GM12878 (cell line): ENCODE measurements at regions of chr12 and their contacts with region 1.

Region 1: DNA sequence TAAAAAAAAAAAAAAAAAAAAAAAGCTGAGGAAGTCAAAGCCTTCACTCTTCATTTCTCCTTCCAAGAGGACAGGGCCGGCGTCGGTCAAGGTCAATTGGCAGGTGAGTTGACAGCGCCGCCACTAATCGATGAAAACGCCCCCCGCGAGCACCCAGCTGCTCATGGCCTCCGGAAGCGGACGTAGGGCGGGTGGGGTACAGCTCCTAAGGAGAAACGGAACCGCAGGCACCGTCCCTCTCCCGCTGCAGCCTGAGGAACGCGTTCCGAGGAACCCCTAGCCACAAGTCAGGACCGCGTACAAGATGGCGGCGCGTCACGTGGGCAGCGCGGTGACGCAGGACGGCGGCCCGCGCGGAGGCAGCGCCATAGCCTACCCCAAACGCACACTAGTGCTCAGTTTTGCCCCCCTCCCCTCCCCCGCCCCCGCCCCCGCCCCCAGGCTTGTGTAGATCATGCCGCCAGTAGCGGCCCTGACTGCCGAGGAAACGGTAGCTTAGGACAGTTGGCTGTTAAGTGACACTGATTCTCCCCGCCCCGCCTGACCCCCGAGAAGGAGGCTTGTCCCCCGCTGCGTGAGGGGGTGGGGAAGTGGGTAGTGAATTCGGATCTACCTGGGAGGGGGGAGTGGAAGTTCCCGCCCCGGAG is at the start of gene ATF1:
- DNase-seq: peak; percentile 73
- ATAC-seq: peak; percentile 85
- H3K4me3 ChIP-seq: peak within 1 kb of the TSS; percentile 96
- H3K27ac ChIP-seq: peak within 1 kb of the TSS; percentile 97
- H3K4me1 ChIP-seq: peaks cover 4% of the 10 kb centered on the region; the same call in 1 of the 2 replicates
- H3K27me3 ChIP-seq: no peaks in the 10 kb centered on the region
- CTCF ChIP-seq: no peak
- EP300 ChIP-seq: 0 out of 4 replicates have a peak, but pooled peaks of 1 of the 2 experiments have one; percentile 14
- POLR2A ChIP-seq: peak; percentile 95
- RAD21 ChIP-seq: no peak
- polyA plus RNA-seq, gene ATF1: 15.4 to 17.0 TPM

Region 2: DNA sequence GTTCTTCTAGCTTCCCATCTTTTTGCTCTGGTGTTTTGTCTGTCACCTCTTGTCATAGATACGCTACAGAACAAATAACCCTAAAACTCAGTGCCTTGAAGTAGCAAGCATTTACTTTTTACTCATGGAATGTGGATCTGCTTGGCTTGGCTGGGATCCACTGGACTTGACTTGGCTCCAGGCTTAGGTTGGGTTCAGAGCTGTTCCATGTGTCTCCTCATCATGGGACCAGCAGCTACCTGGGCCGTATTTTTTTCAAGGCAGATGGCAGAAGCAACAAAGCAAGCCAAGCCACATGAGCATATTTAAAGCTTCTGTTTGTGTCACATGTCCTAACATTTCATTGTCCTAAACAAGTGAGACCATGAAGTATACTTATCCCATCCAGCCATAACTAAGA is 48.6 kb before region 1 on chr12:
- CTCF ChIA-PET with region 1: no interaction called
- POLR2A ChIA-PET with region 1: no interaction called
- RAD21 ChIA-PET with region 1: no interaction called
- SMC1A ChIA-PET with region 1: no interaction called
- in situ Hi-C with region 1: no loop called
- intact Hi-C with region 1: no loop called
- DNase-seq: no peak
- ATAC-seq: no peak
- H3K4me3 ChIP-seq: no peak overlapping the region
- H3K27ac ChIP-seq: no peak overlapping the region
- H3K4me1 ChIP-seq: no peaks in the 10 kb centered on the region
- H3K27me3 ChIP-seq: no peaks in the 10 kb centered on the region
- CTCF ChIP-seq: no peak
- EP300 ChIP-seq: no peak
- POLR2A ChIP-seq: no peak
- RAD21 ChIP-seq: no peak

Region 3: GRCh38 chr12:50751948-50752721 is 11.6 kb before region 1 on chr12:
- CTCF ChIA-PET with region 1: interaction called, 8 read pairs
- POLR2A ChIA-PET with region 1: interaction called, 11 read pairs
- RAD21 ChIA-PET with region 1: interaction called, 4 read pairs
- SMC1A ChIA-PET with region 1: interaction called, 3 read pairs
- in situ Hi-C with region 1: no loop called
- intact Hi-C with region 1: no loop called
- DNase-seq: no peak
- ATAC-seq: peak; percentile 58
- H3K4me3 ChIP-seq: no peak overlapping the region
- H3K27ac ChIP-seq: no peak overlapping the region
- H3K4me1 ChIP-seq: no peaks in the 10 kb centered on the region
- H3K27me3 ChIP-seq: no peaks in the 10 kb centered on the region
- CTCF ChIP-seq: no peak
- EP300 ChIP-seq: no peak
- POLR2A ChIP-seq: no peak
- RAD21 ChIP-seq: no peak

Region 4: DNA sequence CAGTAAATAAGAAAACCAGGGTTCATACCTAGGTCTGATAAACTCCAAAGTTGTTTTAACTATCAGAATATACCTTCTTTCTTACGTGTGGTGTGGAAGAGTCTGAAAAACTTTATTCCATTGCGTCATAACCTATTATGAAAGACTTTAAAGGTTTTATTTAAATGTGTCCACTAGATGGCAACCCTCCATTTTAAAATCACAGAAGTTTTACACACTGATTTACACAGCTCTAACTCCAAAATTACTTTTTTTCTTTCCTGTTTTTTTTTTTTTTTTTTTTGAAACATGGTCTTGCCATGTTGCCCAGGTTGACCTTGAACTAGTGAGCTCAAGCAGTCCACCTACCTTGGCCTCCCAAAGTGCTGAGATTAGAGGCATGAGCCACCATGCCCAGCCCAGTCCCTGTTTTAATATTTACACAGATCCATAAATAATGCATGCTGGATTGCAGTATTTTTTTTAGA is 61.6 kb after region 1 on chr12:
- CTCF ChIA-PET with region 1: interaction called, 27 read pairs
- POLR2A ChIA-PET with region 1: interaction called, 4 read pairs
- RAD21 ChIA-PET with region 1: interaction called, 22 read pairs
- SMC1A ChIA-PET with region 1: interaction called, 11 read pairs
- in situ Hi-C with region 1: no loop called
- intact Hi-C with region 1: loop called (anchors 1 kb)
- DNase-seq: no peak
- ATAC-seq: peak; percentile 82
- H3K4me3 ChIP-seq: no peak overlapping the region
- H3K27ac ChIP-seq: no peak overlapping the region
- H3K4me1 ChIP-seq: no peaks in the 10 kb centered on the region
- H3K27me3 ChIP-seq: no peaks in the 10 kb centered on the region
- CTCF ChIP-seq: peak in 2 of 3 experiments; percentile 30 to 53; a peak in 3 of 6 replicates
- EP300 ChIP-seq: no peak
- POLR2A ChIP-seq: no peak
- RAD21 ChIP-seq: peak; percentile 68

Region 5: GRCh38 chr12:51020448-51021182 is 256.9 kb after region 1 on chr12:
- CTCF ChIA-PET with region 1: interaction called, 34 read pairs
- POLR2A ChIA-PET with region 1: interaction called, 11 read pairs
- RAD21 ChIA-PET with region 1: interaction called, 16 read pairs
- SMC1A ChIA-PET with region 1: interaction called, 19 read pairs
- in situ Hi-C with region 1: no loop called
- intact Hi-C with region 1: loop called (anchors 5 kb)
- DNase-seq: no peak
- ATAC-seq: peak; percentile 9; the same call in 1 of the 3 replicates
- H3K4me3 ChIP-seq: no peak overlapping the region
- H3K27ac ChIP-seq: no peak overlapping the region
- H3K4me1 ChIP-seq: peaks cover 14% of the 10 kb centered on the region; the same call in 1 of the 2 replicates
- H3K27me3 ChIP-seq: no peaks in the 10 kb centered on the region
- CTCF ChIP-seq: no peak
- EP300 ChIP-seq: no peak
- POLR2A ChIP-seq: no peak
- RAD21 ChIP-seq: no peak

Region 6: GRCh38 chr12:51326762-51327439 is 563.1 kb after region 1 on chr12:
- CTCF ChIA-PET with region 1: interaction called, 6 read pairs
- POLR2A ChIA-PET with region 1: no interaction called
- RAD21 ChIA-PET with region 1: interaction called, 3 read pairs
- SMC1A ChIA-PET with region 1: interaction called, 4 read pairs
- in situ Hi-C with region 1: no loop called
- intact Hi-C with region 1: loop called (anchors 10 kb)
- DNase-seq: peak; percentile 77
- ATAC-seq: peak; percentile 43
- H3K4me3 ChIP-seq: peak overlapping the region; percentile 41; the same call in 1 of the 2 replicates
- H3K27ac ChIP-seq: peak overlapping the region; percentile 83
- H3K4me1 ChIP-seq: peaks cover 41% of the 10 kb centered on the region
- H3K27me3 ChIP-seq: no peaks in the 10 kb centered on the region
- CTCF ChIP-seq: no peak
- EP300 ChIP-seq: 0 out of 4 replicates have a peak, but pooled peaks of 1 of the 2 experiments have one; percentile 12
- POLR2A ChIP-seq: no peak
- RAD21 ChIP-seq: no peak